Aorta (tissue), 5 donors: ENCODE measurements at regions of chr7 and their contacts with region 1.

Region 1: DNA sequence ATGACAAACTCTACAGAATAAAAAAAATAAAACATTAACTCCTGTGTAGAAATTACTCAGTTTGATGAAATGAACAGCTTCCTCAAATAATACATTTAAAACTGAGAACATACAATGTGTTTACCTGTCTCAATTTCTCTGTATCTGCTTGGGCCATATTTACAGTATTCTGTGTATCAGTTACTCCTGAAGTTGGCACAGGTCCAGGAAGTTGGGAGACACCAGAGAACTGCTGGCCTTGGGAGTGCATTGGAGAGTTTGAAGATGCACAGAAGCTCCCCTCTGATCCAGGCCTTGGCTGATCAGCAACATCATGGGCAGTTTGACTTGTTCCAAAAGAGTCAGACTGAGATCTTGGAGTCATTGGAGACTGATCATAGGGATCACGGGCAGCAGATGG is 155.1 kb downstream of the GALNT11 start:
- DNase-seq: no peak
- ATAC-seq: no peak
- H3K4me3 ChIP-seq: no peak overlapping the region
- H3K27ac ChIP-seq: no peak overlapping the region
- H3K4me1 ChIP-seq: no peaks in the 10 kb centered on the region
- H3K27me3 ChIP-seq: no peaks in the 10 kb centered on the region

Region 2: GRCh38 chr7:152090747-152091146 is 89.8 kb before region 1 on chr7:
- intact Hi-C with region 1: no loop called
- DNase-seq: no peak
- ATAC-seq: no peak
- H3K4me3 ChIP-seq: no peak overlapping the region
- H3K27ac ChIP-seq: no peak overlapping the region
- H3K4me1 ChIP-seq: no peaks in the 10 kb centered on the region
- H3K27me3 ChIP-seq: no peaks in the 10 kb centered on the region

Region 3: DNA sequence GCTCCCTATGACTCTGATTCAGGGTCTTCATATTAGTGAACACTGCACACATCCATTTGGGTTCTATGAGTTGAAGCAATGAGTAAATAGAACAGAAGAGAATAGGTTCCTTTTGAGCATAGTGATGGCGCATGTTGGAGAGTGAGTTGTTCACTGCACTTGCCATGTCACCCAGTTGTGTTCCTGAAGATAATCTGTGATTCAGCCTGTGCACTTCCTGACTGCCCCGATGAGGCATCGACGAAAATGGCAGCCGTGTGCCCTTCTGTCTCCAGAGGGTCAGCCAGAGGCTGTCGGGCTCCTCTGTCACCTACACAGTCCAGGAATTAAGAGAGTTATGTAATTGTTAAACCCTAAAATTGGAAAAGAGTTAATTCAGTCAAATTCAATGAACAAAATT is 60.4 kb before region 1 on chr7:
- intact Hi-C with region 1: loop called in 1 of 2 experiments (anchors 10 kb)
- DNase-seq: no peak
- ATAC-seq: no peak
- H3K4me3 ChIP-seq: no peak overlapping the region
- H3K27ac ChIP-seq: no peak overlapping the region
- H3K4me1 ChIP-seq: no peaks in the 10 kb centered on the region
- H3K27me3 ChIP-seq: no peaks in the 10 kb centered on the region